Activated naive CD8-positive, alpha-beta T cell treated with anti-CD3 and anti-CD28 coated beads, Interleukin-2, amount 10 ng/mL, durations not matched to agents 7 days and 5 days (primary cell): ENCODE measurements at regions of chr19 and their contacts with region 1.

Region 1: GRCh38 chr19:3762501-3763459 is at the start of gene MRPL54:
- DNase-seq: peak; percentile 99
- ATAC-seq: peak; percentile 84
- H3K4me3 Mint-ChIP-seq: peak within 1 kb of the TSS; percentile 99
- H3K27ac Mint-ChIP-seq: peak within 1 kb of the TSS; percentile 100
- H3K4me1 Mint-ChIP-seq: peaks cover 22% of the 10 kb centered on the region
- H3K27me3 Mint-ChIP-seq: no peaks in the 10 kb centered on the region
- total RNA-seq, gene MRPL54: 68.9 to 73.9 TPM

Region 2: GRCh38 chr19:3642987-3643673 is 119.7 kb before region 1 on chr19:
- POLR2A ChIA-PET with region 1: no interaction called
- DNase-seq: no peak
- ATAC-seq: no peak
- H3K4me3 Mint-ChIP-seq: no peak overlapping the region
- H3K27ac Mint-ChIP-seq: no peak overlapping the region
- H3K4me1 Mint-ChIP-seq: no peaks in the 10 kb centered on the region
- H3K27me3 Mint-ChIP-seq: no peaks in the 10 kb centered on the region

Region 3: GRCh38 chr19:3738477-3739220 is 24.1 kb before region 1 on chr19:
- POLR2A ChIA-PET with region 1: interaction called, 16 read pairs
- DNase-seq: no peak
- ATAC-seq: no peak
- H3K4me3 Mint-ChIP-seq: no peak overlapping the region
- H3K27ac Mint-ChIP-seq: peak overlapping the region; percentile 78
- H3K4me1 Mint-ChIP-seq: peaks cover 5% of the 10 kb centered on the region
- H3K27me3 Mint-ChIP-seq: no peaks in the 10 kb centered on the region

Region 4: GRCh38 chr19:3810708-3811355 is 48.1 kb after region 1 on chr19:
- POLR2A ChIA-PET with region 1: interaction called, 47 read pairs
- DNase-seq: no peak
- ATAC-seq: no peak
- H3K4me3 Mint-ChIP-seq: no peak overlapping the region
- H3K27ac Mint-ChIP-seq: no peak overlapping the region
- H3K4me1 Mint-ChIP-seq: peaks cover 31% of the 10 kb centered on the region
- H3K27me3 Mint-ChIP-seq: no peaks in the 10 kb centered on the region

Region 5: DNA sequence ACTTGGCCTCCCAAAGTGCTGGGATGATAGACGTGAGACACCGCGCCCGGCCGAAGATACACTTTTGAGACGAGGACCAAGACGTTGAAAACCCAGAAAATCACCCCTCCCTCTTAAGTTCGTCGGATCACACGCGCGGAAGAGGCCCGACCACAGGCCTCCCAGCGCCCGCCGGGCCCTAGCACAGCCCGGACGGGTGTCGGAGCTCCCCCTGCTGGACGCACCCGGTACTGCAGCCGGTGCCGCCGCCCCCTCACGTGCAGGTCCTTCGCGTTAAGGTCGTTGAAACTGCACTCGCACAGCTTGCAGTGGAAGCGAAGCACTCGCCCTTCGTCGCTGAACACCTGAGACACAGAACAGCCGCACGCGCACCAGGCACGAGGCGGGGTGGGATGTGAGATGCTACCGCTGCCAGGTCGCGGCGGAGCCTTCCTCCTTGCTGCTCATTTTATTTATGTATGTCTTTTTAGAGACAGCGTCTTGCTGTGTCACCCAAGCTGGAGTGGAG is 59.1 kb after region 1 on chr19:
- POLR2A ChIA-PET with region 1: interaction called, 54 read pairs
- DNase-seq: peak; percentile 97
- ATAC-seq: peak; percentile 89
- H3K4me3 Mint-ChIP-seq: peak overlapping the region; percentile 53
- H3K27ac Mint-ChIP-seq: peak overlapping the region; percentile 78
- H3K4me1 Mint-ChIP-seq: peaks cover 9% of the 10 kb centered on the region
- H3K27me3 Mint-ChIP-seq: no peaks in the 10 kb centered on the region